Gastrocnemius medialis (tissue), 4 donors: ENCODE measurements at regions of chr12 and their contacts with region 1.

Region 1: DNA sequence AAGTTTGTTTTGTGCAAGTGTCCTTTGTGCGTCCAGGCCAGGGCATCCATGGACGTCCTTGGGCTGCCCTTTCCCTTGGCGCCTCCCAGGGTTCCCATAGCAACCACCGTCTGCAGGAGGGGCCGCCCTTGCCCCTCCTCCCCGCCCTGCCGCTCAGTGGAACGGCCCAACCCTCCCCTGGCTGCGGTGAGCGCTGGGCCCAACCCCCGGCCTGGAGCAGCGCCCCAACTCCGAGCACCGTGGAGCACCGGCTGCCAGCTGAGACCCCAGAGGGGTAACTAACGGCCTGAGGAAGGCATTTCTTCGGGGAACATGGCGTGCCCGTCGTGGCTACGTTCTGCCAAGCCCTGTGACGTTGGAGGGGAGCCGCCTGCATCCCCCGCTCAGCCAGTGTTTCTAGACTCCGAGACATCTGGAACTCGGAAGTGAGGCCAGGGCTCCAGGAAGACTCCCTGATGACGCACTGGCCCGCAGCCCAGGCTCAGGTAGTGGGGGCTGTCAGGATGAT is 5.3 kb upstream of the ACACB start:
- DNase-seq: peak; percentile 76 to 84
- ATAC-seq: peak; percentile 8 to 22
- H3K4me3 ChIP-seq: peak overlapping the region; percentile 54 to 60 (median 58)
- H3K27ac ChIP-seq: peak overlapping the region; percentile 93 to 99 (median 97)
- H3K4me1 ChIP-seq: peaks cover 27 to 43% of the 10 kb centered on the region in 2 donors
- H3K27me3 ChIP-seq: no peaks in the 10 kb centered on the region
- CTCF ChIP-seq: peak in 1 of 5 experiments; percentile 13
- POLR2A ChIP-seq: peak; percentile 52 to 66

Region 2: GRCh38 chr12:108691175-108691997 is 419.7 kb before region 1 on chr12:
- in situ Hi-C with region 1: loop called in 1 of 4 experiments (anchors 25 kb)
- intact Hi-C with region 1: loop called (anchors 5 kb)
- DNase-seq: peak; percentile 98 to 100
- ATAC-seq: peak; percentile 68 to 72
- H3K4me3 ChIP-seq: peak overlapping the region; percentile 34 to 49 (median 45)
- H3K27ac ChIP-seq: peak overlapping the region; percentile 92 to 98 (median 96)
- H3K4me1 ChIP-seq: peaks cover 86 to 91% of the 10 kb centered on the region in 2 donors
- H3K27me3 ChIP-seq: no peaks in the 10 kb centered on the region
- CTCF ChIP-seq: peak; percentile 44 to 68 (median 56)
- POLR2A ChIP-seq: peak; percentile 60 to 70

Region 3: GRCh38 chr12:108803428-108804105 is 307.5 kb before region 1 on chr12:
- in situ Hi-C with region 1: no loop called
- intact Hi-C with region 1: loop called (anchors 10 kb)
- DNase-seq: peak; percentile 69 to 80
- ATAC-seq: peak; percentile 61 to 70
- H3K4me3 ChIP-seq: peak overlapping the region in 1 of 4 donors; percentile 11
- H3K27ac ChIP-seq: peak overlapping the region; percentile 93 to 97 (median 96)
- H3K4me1 ChIP-seq: peaks cover 62% of the 10 kb centered on the region in 2 donors
- H3K27me3 ChIP-seq: no peaks in the 10 kb centered on the region
- CTCF ChIP-seq: peak; percentile 93 to 97 (median 95)
- POLR2A ChIP-seq: peak in 1 of 2 donors; percentile 11

Region 4: GRCh38 chr12:109084425-109084824 is 26.6 kb before region 1 on chr12:
- in situ Hi-C with region 1: no loop called
- intact Hi-C with region 1: no loop called
- DNase-seq: no peak
- ATAC-seq: no peak
- H3K4me3 ChIP-seq: no peak overlapping the region
- H3K27ac ChIP-seq: no peak overlapping the region
- H3K4me1 ChIP-seq: peaks cover 4 to 11% of the 10 kb centered on the region in 2 donors
- H3K27me3 ChIP-seq: no peaks in the 10 kb centered on the region
- CTCF ChIP-seq: no peak
- POLR2A ChIP-seq: no peak

Region 5: GRCh38 chr12:109131154-109132050 is 20.4 kb after region 1 on chr12:
- in situ Hi-C with region 1: no loop called
- intact Hi-C with region 1: loop called (anchors 1 kb)
- DNase-seq: peak; percentile 94 to 97
- ATAC-seq: peak; percentile 50 to 64
- H3K4me3 ChIP-seq: peak overlapping the region; percentile 50 to 71 (median 62)
- H3K27ac ChIP-seq: peak overlapping the region; percentile 93 to 99 (median 97)
- H3K4me1 ChIP-seq: peaks cover 54 to 80% of the 10 kb centered on the region in 2 donors
- H3K27me3 ChIP-seq: no peaks in the 10 kb centered on the region
- CTCF ChIP-seq: no peak
- POLR2A ChIP-seq: peak; percentile 80 to 86

Region 6: DNA sequence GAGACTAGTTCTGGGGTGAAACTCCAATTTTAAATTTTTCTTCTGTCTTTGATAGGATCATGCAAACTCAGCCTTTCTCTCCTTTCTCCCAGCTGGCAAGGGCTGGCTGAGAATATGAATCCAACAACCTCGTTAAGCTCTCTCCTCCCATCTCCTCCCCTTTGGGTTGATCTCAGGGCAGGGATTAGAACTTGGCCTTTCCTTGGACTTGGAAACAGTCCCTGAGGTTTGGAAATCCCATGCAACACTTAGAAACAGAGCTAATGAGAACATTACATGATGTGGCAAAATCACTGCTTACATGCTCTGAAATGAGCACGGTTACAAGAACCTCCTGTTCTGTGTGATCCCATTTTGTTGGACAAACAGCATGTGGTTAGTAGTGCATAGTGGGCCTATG is 36.9 kb after region 1 on chr12:
- in situ Hi-C with region 1: no loop called
- intact Hi-C with region 1: loop called (anchors 1 kb)
- DNase-seq: peak; percentile 81 to 87
- ATAC-seq: peak; percentile 90 to 95
- H3K4me3 ChIP-seq: peak overlapping the region in 3 of 4 donors; percentile 0 to 22 (median 4)
- H3K27ac ChIP-seq: peak overlapping the region; percentile 86 to 97 (median 90)
- H3K4me1 ChIP-seq: peaks cover 67 to 76% of the 10 kb centered on the region in 2 donors
- H3K27me3 ChIP-seq: no peaks in the 10 kb centered on the region
- CTCF ChIP-seq: no peak
- POLR2A ChIP-seq: peak; percentile 40 to 79

Region 7: GRCh38 chr12:109160433-109160832 is 49.4 kb after region 1 on chr12:
- in situ Hi-C with region 1: no loop called
- intact Hi-C with region 1: loop called (anchors 5 kb)
- DNase-seq: peak in 1 of 2 donors; percentile 37
- ATAC-seq: peak; percentile 39 to 45
- H3K4me3 ChIP-seq: peak overlapping the region in 2 of 4 donors; percentile 14 to 19
- H3K27ac ChIP-seq: peak overlapping the region; percentile 78 to 97 (median 90)
- H3K4me1 ChIP-seq: peaks cover 63 to 66% of the 10 kb centered on the region in 2 donors
- H3K27me3 ChIP-seq: no peaks in the 10 kb centered on the region
- CTCF ChIP-seq: no peak
- POLR2A ChIP-seq: no peak